CD14-positive monocyte (primary cell): ENCODE measurements at regions of chr12 and their contacts with region 1.

Region 1: DNA sequence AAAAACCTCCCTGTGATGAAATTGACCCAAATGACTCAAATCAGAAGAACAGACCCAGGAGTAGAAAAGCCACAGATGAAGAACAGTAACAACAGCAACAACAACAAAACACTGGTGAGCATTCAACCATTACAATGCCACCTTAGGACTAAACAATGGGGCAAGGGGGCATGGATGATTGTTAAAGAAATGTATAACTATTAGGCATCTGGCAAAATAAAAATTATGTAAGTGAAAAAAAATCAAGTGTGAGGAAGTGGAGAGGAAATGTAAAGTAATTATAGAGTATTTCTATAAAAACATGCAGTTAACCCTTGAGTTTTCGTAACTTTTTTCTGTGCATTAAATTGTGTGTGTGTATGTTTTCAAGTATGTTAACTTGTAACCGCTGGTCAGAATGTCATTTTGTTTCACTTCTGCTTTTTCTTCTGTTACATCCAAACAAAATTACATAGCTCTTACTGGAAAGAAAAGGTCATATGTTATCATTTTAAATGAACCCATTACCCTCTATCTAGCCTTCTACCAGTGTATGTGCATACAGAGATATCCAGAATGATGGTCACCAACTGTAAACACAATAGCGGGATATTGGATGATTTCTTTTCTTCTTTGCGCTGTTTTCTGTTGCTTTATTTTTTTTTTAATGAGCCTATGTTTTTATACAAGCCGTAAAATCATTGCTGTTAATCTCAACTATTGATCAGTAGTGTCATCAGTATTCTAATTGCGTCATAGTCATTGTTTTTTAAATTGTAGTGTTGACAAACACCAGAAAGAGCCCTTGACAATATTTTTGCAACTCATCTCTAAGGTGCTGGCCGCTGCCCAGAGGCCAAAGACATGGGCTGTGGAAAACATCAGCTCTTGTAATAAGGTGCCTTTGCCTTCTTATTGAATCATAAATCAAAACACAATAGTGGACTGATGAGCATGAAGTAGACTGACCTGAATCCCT is 170.6 kb downstream of the CRADD start:
- DNase-seq: peak; percentile 78 to 91 (median 82)
- H3K4me3 ChIP-seq: peak overlapping the region in 1 of 3 experiments; percentile 17
- H3K4me3 Mint-ChIP-seq: peak overlapping the region in 1 of 2 donors; percentile 61
- H3K27ac ChIP-seq: peak overlapping the region; percentile 86 to 93
- H3K27ac Mint-ChIP-seq: peak overlapping the region; percentile 94 to 99 (median 97)
- H3K4me1 ChIP-seq: peaks cover 33 to 51% of the 10 kb centered on the region in 2 donors
- H3K4me1 Mint-ChIP-seq: peaks cover 38% of the 10 kb centered on the region
- H3K27me3 ChIP-seq: no peaks in the 10 kb centered on the region
- H3K27me3 Mint-ChIP-seq: peaks cover 0 to 3% (median 2%) of the 10 kb centered on the region in 3 donors
- CTCF ChIP-seq: no peak

Region 2: DNA sequence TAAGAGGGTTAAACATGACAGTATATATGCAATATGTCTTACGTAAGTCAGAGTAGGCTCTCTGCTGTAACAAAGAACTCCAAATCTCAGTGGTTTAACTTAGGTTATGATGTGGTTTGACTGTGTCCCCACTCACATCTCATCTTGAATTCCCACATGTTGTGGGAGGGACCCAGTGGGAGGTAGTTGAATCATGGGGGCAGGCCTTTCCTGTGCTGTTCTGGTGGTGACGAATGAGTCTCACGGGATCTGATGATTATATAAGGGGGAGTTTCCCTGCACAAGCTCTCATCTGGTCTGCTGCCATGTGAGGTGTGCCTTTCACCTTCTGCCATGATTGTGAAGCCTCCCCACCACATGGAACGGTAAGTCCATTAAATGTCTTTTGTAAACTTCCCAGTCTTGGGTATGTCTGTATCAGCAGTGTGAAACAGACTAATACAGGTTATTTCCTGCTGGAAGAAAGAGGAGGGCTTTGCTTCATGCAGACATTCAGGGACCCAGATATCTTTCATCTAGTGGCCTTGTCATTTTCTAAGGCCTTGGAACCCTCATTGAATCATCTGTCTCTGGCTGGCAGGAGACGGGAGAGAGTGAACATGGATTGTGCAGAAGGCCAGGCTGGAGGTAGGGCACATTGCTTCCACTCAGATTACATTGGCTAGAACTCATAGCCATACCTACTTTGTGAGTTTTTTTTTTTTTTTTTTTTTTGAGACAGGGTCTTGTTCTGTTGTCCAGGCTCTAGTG is 74.5 kb before region 1 on chr12:
- intact Hi-C with region 1: loop called in 1 of 2 experiments (anchors 2 kb)
- DNase-seq: peak; percentile 89 to 97 (median 92)
- H3K4me3 ChIP-seq: no peak overlapping the region
- H3K4me3 Mint-ChIP-seq: peak overlapping the region in 1 of 2 donors; percentile 7
- H3K27ac ChIP-seq: peak overlapping the region; percentile 21 to 90
- H3K27ac Mint-ChIP-seq: peak overlapping the region; percentile 88 to 98 (median 95)
- H3K4me1 ChIP-seq: peaks cover 35 to 43% of the 10 kb centered on the region in 2 donors
- H3K4me1 Mint-ChIP-seq: peaks cover 42% of the 10 kb centered on the region
- H3K27me3 ChIP-seq: no peaks in the 10 kb centered on the region
- H3K27me3 Mint-ChIP-seq: peaks cover 0 to 10% (median 0%) of the 10 kb centered on the region in 3 donors
- CTCF ChIP-seq: no peak